ENCODE measurements at regions of chr9 and their contacts with region 1.

Region 1: GRCh38 chr9:109182940-109183798 is 16.1 kb upstream of the FRRS1L start:
- DNase-seq: no peak
- H3K4me3 ChIP-seq: no peak overlapping the region
- H3K27me3 ChIP-seq: no peaks in the 10 kb centered on the region; the same call in 1 of the 2 replicates
- CTCF ChIP-seq: peak; percentile 57

Region 2: DNA sequence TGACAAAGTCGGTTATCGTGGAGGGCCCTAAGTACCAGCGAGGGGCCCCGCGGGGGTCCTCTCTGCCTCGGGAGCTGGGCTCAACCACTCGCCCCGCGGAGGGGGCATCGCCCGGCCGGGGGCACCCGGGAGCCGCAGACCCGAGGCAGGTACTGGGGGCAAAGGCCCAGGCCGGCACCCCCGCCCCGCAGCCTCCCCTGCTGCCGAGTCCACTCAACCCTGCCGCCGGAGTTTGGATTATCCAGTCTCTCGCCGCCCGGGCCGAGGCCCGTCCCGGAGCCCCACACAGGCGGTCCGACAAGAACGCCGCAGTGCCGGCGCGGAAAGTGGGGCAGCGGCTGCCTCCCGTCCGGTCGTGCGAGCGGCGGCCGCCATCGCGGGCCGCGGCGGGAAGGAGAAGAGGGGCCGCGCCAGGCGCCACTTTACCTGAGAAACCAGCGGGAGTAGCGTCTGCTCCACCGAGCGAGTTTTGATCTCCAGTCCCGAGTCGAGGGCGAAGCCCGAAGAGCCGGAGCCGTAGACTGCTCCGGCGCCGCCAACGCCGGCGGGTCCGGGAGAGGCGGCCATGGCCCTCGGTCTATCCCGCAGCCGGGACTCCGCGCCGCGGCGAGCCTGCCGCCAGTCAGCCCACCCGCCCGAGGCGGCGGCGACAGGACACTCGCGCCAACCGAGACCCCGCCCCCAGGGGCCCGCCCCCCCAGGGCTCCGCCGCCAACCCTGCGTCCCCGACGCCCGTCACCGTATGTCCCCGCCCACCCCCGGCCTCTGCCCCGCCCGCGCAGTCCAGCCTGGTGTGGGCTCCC is 170.1 kb before region 1 on chr9 and contains the start of gene CTNNAL1:
- CTCF ChIA-PET with region 1: no interaction called
- POLR2A ChIA-PET with region 1: interaction called, 16 read pairs
- DNase-seq: peak; percentile 40
- H3K4me3 ChIP-seq: peak within 1 kb of the TSS; percentile 74
- H3K27me3 ChIP-seq: no peaks in the 10 kb centered on the region
- CTCF ChIP-seq: no peak
- polyA plus RNA-seq, gene CTNNAL1: 32.6 and 70.9 TPM in 2 replicates

Region 3: DNA sequence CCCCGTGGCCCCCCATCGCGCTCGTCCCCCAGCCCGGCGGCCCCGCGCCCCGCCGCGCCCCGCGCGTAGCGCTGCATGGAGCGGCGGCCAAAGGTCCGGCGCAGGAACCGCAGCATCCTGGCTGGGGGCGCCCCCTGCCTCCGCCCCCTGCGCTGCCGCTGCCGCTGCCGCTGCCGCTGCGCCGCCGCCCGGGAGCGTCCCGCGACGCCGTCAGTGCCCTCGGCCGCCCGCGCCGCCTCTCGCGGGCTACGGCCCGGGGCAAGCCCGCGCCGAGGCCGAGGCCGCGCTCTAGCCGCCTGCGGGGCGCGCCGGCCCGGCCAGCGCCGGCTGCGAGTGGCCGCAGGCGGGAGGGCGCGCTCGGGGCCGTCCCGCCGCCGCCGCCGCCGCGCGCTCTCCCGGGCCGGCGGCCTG is 137.2 kb after region 1 on chr9:
- CTCF ChIA-PET with region 1: interaction called, 10 read pairs
- POLR2A ChIA-PET with region 1: no interaction called
- DNase-seq: no peak
- H3K4me3 ChIP-seq: peak overlapping the region; percentile 24
- H3K27me3 ChIP-seq: peaks cover 5% of the 10 kb centered on the region
- CTCF ChIP-seq: no peak

Region 4: GRCh38 chr9:109411798-109412352 is 228.7 kb after region 1 on chr9:
- CTCF ChIA-PET with region 1: no interaction called
- POLR2A ChIA-PET with region 1: no interaction called
- DNase-seq: peak; percentile 4
- H3K4me3 ChIP-seq: no peak overlapping the region
- H3K27me3 ChIP-seq: 0 out of 2 replicates have a peak, but pooled peaks cover 1% of the 10 kb centered on the region
- CTCF ChIP-seq: peak; percentile 85

Measured in BJ (cell line).